ENCODE measurements at regions of chr9 and their contacts with region 1.

Region 1: GRCh38 chr9:15211160-15211814 is 95.7 kb downstream of the TTC39B start:
- DNase-seq: peak in 8 of 9 donors; percentile 26 to 69 (median 58)
- ATAC-seq: peak; percentile 78
- H3K4me3 ChIP-seq: no peak overlapping the region
- H3K4me3 Mint-ChIP-seq: no peak overlapping the region
- H3K27ac ChIP-seq: no peak overlapping the region
- H3K27ac Mint-ChIP-seq: no peak overlapping the region
- H3K4me1 ChIP-seq: no peaks in the 10 kb centered on the region
- H3K4me1 Mint-ChIP-seq: peaks cover 4 to 12% (median 8%) of the 10 kb centered on the region in 7 donors
- H3K27me3 ChIP-seq: no peaks in the 10 kb centered on the region
- H3K27me3 Mint-ChIP-seq: no peaks in the 10 kb centered on the region

Region 2: DNA sequence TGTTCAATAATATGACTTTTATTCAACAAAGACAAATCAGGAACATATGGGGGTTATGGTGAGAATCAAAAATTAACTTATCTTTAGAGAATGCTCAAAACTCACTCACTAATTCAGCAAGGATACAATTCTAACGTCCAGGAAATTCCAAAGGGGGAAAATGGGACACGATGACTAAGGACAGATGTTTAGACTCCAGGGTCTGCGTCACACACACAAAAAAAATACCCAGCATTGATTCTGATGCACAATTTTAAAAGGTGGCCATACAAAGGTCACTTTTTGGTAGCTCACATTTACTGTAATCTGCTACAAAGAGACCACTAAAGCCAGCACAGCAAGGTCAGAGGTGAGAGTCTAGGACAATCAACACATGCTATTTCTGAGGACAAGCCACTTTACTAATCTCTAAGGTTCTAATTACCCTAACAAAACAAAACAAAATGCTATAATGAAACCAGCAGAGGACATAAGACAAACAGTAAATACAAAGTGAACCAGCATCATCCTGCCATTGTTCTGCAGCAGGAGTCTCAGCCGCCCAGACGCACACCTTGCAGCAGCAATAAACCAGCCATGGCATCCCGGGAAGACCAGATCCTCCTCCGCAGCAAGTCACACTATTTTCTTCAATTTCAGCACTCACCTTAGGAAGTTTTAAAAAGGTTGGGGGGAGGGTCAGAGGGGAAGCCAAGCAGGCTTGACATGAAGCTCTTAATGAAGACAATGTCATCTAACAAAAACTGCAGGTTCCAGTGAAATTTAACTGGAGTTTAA is 37.9 kb after region 1 on chr9:
- CTCF ChIA-PET with region 1: no interaction called
- POLR2A ChIA-PET with region 1: no interaction called
- intact Hi-C with region 1: no loop called
- DNase-seq: no peak
- ATAC-seq: no peak
- H3K4me3 ChIP-seq: no peak overlapping the region
- H3K4me3 Mint-ChIP-seq: peak overlapping the region in 1 of 10 donors; percentile 31
- H3K27ac ChIP-seq: no peak overlapping the region
- H3K27ac Mint-ChIP-seq: peak overlapping the region in 3 of 9 donors; percentile 9 to 34 (median 28)
- H3K4me1 ChIP-seq: peaks cover 5 to 8% of the 10 kb centered on the region in 2 donors
- H3K4me1 Mint-ChIP-seq: peaks cover 31 to 86% (median 72%) of the 10 kb centered on the region in 7 donors
- H3K27me3 ChIP-seq: no peaks in the 10 kb centered on the region
- H3K27me3 Mint-ChIP-seq: no peaks in the 10 kb centered on the region

Region 3: GRCh38 chr9:15306757-15307534 is 95.7 kb after region 1 on chr9 and contains the start of gene TTC39B:
- CTCF ChIA-PET with region 1: interaction called, 24 read pairs
- POLR2A ChIA-PET with region 1: interaction called, 3 read pairs
- intact Hi-C with region 1: loop called (anchors 1 kb)
- DNase-seq: peak; percentile 34 to 88 (median 53)
- ATAC-seq: peak; percentile 87
- H3K4me3 ChIP-seq: peak within 1 kb of the TSS; percentile 86
- H3K4me3 Mint-ChIP-seq: peak within 1 kb of the TSS; percentile 89 to 99 (median 97)
- H3K27ac ChIP-seq: peak within 1 kb of the TSS; percentile 81
- H3K27ac Mint-ChIP-seq: peak within 1 kb of the TSS; percentile 84 to 97 (median 95)
- H3K4me1 ChIP-seq: peaks cover 25 to 44% of the 10 kb centered on the region in 2 donors
- H3K4me1 Mint-ChIP-seq: peaks cover 37 to 66% (median 61%) of the 10 kb centered on the region in 7 donors
- H3K27me3 ChIP-seq: no peaks in the 10 kb centered on the region
- H3K27me3 Mint-ChIP-seq: no peaks in the 10 kb centered on the region
- total RNA-seq, gene TTC39B: 29.1 to 49.3 (median 42.8) TPM

Region 4: DNA sequence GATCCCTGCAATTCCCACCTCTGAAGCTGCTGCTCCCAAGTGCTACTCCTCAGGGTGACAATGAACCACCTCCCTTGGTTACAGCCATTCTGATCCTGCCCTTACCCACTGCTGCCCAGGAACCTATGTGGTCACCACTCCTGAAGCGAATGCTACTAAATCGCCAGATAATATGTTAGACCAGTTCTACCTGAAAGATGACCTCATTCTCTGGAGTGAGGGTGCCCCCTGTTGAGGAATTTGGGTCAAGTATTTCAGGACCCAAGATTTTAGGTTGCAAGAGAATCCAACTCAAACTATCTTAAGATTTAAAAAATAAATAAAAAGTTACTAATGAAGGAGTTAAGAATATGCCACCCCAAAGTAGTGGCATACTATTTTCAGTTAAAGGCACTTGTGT is 205.6 kb after region 1 on chr9:
- CTCF ChIA-PET with region 1: interaction called, 5 read pairs
- POLR2A ChIA-PET with region 1: no interaction called
- intact Hi-C with region 1: loop called (anchors 1 kb)
- DNase-seq: peak in 7 of 9 donors; percentile 21 to 45 (median 39)
- ATAC-seq: no peak
- H3K4me3 ChIP-seq: no peak overlapping the region
- H3K4me3 Mint-ChIP-seq: no peak overlapping the region
- H3K27ac ChIP-seq: no peak overlapping the region
- H3K27ac Mint-ChIP-seq: no peak overlapping the region
- H3K4me1 ChIP-seq: no peaks in the 10 kb centered on the region
- H3K4me1 Mint-ChIP-seq: peaks cover 0 to 10% (median 2%) of the 10 kb centered on the region in 7 donors
- H3K27me3 ChIP-seq: no peaks in the 10 kb centered on the region
- H3K27me3 Mint-ChIP-seq: peaks cover 0 to 7% (median 0%) of the 10 kb centered on the region in 5 donors

Region 5: GRCh38 chr9:15485836-15486666 is 274.8 kb after region 1 on chr9:
- CTCF ChIA-PET with region 1: no interaction called
- POLR2A ChIA-PET with region 1: no interaction called
- intact Hi-C with region 1: loop called in 1 of 2 experiments (anchors 2 kb)
- DNase-seq: peak in 5 of 9 donors; percentile 27 to 41 (median 31)
- ATAC-seq: peak; percentile 45
- H3K4me3 ChIP-seq: no peak overlapping the region
- H3K4me3 Mint-ChIP-seq: no peak overlapping the region
- H3K27ac ChIP-seq: no peak overlapping the region
- H3K27ac Mint-ChIP-seq: peak overlapping the region in 8 of 9 donors; percentile 10 to 63 (median 42)
- H3K4me1 ChIP-seq: peaks cover 6 to 9% of the 10 kb centered on the region in 2 donors
- H3K4me1 Mint-ChIP-seq: peaks cover 19 to 57% (median 47%) of the 10 kb centered on the region in 7 donors
- H3K27me3 ChIP-seq: no peaks in the 10 kb centered on the region
- H3K27me3 Mint-ChIP-seq: no peaks in the 10 kb centered on the region

Region 6: DNA sequence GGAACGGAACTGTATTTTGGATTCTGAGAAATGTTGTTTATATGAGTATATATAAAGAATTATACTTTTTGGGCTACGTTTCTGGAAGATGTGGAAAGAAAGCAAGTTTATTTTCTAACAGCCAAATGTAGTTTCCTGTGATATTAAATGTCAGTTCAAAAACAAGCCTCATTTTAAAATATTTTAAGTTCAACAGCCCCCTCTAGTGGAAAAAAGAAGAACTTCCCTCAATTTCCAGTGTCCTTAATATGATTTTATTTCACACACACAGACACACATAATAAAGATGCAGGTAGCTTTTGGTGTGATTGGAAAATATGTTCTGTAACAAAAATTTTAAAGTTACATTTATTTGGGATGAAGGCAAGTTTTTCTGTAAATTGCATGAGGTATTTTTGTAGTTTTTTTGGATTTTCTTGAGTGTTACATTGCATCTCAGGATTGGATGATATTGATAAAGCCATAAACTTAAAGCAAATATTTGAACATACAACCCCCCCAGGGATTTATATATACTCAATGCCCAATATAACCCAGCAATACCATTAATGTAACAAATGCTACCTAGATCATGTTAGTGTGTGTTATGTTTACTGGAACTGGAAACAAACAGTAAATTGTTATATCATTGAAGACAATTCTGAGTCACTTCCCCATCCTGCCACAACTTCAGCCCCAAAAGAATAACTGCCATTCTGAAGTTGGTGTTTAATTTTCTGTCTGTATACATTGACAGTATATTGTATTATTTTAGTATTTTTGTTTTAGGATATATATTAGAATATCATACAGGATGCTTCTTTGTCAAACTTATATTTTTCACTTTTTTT is 395.6 kb after region 1 on chr9:
- CTCF ChIA-PET with region 1: interaction called, 11 read pairs
- POLR2A ChIA-PET with region 1: interaction called, 6 read pairs
- intact Hi-C with region 1: loop called (anchors 1 kb)
- DNase-seq: peak in 7 of 9 donors; percentile 29 to 71 (median 60)
- ATAC-seq: peak; percentile 55
- H3K4me3 ChIP-seq: no peak overlapping the region
- H3K4me3 Mint-ChIP-seq: no peak overlapping the region
- H3K27ac ChIP-seq: no peak overlapping the region
- H3K27ac Mint-ChIP-seq: no peak overlapping the region
- H3K4me1 ChIP-seq: no peaks in the 10 kb centered on the region
- H3K4me1 Mint-ChIP-seq: peaks cover 0 to 7% (median 0%) of the 10 kb centered on the region in 7 donors
- H3K27me3 ChIP-seq: no peaks in the 10 kb centered on the region
- H3K27me3 Mint-ChIP-seq: no peaks in the 10 kb centered on the region